ENCODE measurements at regions of chr7 and their contacts with region 1.

Region 1: DNA sequence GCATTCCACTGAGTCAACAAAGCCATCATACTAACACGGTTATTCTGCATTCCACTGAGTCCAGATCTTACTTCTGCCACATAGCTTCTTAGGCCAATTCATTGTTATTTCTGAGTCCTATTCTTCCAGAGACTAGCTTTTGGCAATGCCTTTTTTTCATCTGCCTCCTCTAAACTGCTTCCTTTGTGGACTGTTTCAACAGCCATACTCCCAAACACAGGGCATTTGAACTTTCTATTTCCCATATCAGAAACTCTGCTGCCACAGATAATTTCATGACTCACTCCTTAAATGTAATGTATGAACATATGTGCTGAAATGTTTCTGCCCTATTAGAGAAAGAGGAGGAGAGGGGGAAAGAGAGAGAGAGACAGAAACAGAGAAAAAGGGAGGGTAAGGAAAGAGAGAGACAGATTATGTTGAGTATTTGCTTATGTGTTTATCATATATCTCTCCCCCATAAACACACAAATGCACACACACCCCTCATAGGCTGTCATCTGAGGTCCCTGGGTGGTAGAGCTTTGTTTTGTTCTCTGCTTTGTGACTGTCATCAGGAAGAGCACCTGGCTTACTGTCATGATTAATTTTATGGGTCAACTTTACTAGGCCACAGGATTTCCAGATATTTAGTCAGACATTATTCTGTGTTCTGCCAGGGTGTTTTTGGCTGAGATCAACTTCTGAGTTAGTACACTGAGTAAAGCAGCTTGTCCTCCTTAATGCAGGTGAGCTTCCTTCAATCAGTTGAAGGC is 308.0 kb upstream of the KCND2 start:
- DNase-seq: no peak
- ATAC-seq: peak; percentile 46 to 63
- H3K4me3 ChIP-seq: no peak overlapping the region
- H3K27ac ChIP-seq: peak overlapping the region; percentile 31 to 41 (median 34)
- H3K4me1 ChIP-seq: peaks cover 0 to 2% of the 10 kb centered on the region in 2 donors
- H3K27me3 ChIP-seq: no peaks in the 10 kb centered on the region
- CTCF ChIP-seq: no peak
- POLR2A ChIP-seq: no peak

Region 2: GRCh38 chr7:120064565-120064964 is 99.6 kb after region 1 on chr7:
- in situ Hi-C with region 1: no loop called
- intact Hi-C with region 1: loop called (anchors 10 kb)
- DNase-seq: no peak
- ATAC-seq: peak; percentile 90 to 95
- H3K4me3 ChIP-seq: no peak overlapping the region
- H3K27ac ChIP-seq: peak overlapping the region; percentile 69 to 77 (median 72)
- H3K4me1 ChIP-seq: peaks cover 0 to 4% of the 10 kb centered on the region in 2 donors
- H3K27me3 ChIP-seq: no peaks in the 10 kb centered on the region
- CTCF ChIP-seq: no peak
- POLR2A ChIP-seq: no peak